B cell (primary cell): ENCODE measurements at regions of chr11 and their contacts with region 1.

Region 1: DNA sequence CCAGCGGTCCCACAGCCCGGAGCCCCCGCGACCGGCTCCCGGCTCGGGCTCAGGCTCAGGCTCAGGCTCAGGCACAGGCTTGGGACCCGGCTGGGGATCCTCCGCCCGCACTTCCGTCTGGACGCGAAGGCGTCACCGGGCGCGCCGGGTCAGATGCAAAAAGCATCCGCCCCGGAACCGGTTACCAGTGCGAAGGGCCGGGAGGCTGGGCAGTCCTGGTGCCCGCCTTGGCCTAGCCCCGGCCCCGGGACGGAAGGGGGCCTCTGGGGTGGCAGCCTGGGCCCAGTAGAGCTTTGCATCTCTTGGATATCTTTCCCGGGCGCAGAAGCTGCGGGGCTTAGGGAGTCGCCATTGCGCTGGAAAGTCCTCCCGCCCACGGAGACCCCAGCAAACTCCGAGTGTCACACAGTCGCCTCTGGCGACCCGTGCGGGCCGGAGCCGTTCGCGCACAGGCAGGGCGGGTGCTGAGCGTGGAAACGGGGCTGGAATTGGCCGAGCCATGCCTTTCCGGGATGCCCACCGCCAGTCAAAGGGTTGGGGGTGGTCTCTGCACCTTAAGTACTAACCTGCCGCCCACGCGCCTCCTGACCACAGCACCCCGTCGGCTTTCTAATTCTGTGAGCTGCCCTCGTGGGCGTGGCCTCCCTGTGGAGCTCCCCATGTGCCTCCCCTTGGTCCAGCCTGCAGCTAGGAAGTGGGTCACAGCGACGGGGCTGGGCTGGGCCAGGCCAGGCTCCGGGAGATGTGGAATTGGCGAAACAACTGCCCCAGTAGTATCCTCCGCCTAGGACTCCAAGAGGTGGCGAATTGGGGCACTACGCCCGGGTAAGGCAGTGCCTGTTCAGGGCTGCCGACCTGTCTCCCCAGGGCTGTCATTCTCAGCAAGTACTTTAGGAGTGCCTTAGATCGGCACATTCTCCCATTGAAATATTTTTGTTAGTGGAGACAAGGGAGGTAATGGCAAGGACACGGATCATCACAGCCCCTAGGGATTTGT is at the start of gene TMEM9B:
- DNase-seq: peak; percentile 91
- ATAC-seq: peak; percentile 84
- H3K4me3 ChIP-seq: peak within 1 kb of the TSS; percentile 50 to 89 (median 85)
- H3K4me3 Mint-ChIP-seq: peak within 1 kb of the TSS; percentile 96
- H3K27ac ChIP-seq: peak within 1 kb of the TSS; percentile 89 to 94
- H3K27ac Mint-ChIP-seq: peak within 1 kb of the TSS; percentile 93
- H3K4me1 ChIP-seq: peaks cover 15 to 20% of the 10 kb centered on the region in 2 donors
- H3K4me1 Mint-ChIP-seq: peaks cover 35% of the 10 kb centered on the region
- H3K27me3 ChIP-seq: no peaks in the 10 kb centered on the region
- H3K27me3 Mint-ChIP-seq: no peaks in the 10 kb centered on the region
- CTCF ChIP-seq: no peak
- total RNA-seq, gene TMEM9B: 29.3 and 30.4 TPM in 2 replicates

Region 2: DNA sequence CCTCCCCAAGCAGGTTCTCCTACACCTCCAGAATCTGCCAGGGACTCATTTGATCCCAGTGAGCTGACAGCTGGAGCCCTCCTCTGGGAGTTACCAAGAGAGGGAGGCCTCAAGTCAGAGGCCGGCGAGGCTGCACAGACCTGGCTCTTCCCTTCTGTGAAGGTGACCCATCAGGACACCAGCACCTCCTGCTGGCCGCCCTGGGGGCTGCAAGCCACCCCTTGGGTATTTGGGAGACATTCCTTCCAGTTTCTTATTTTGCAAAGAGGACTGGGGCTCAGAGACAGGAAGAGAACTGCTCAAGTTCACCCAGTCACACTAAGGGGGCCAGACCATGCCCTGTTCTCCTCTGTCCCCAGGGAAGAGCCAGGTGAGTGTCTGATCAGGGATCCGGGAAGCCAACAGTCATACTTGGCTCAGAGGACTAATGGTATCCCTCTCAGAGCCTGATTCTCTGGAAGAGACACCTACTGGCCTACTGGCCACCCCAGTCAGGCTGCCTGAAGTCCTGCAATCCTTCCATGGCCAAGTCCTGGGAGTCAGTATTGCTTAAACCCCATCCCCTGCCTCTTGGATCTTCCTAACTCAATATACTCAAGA is 755.3 kb before region 1 on chr11:
- CTCF ChIA-PET with region 1: no interaction called
- POLR2A ChIA-PET with region 1: no interaction called
- intact Hi-C with region 1: loop called (anchors 10 kb)
- DNase-seq: peak; percentile 73
- ATAC-seq: peak; percentile 49
- H3K4me3 ChIP-seq: no peak overlapping the region
- H3K4me3 Mint-ChIP-seq: no peak overlapping the region
- H3K27ac ChIP-seq: no peak overlapping the region
- H3K27ac Mint-ChIP-seq: peak overlapping the region; percentile 50
- H3K4me1 ChIP-seq: peaks cover 33 to 54% of the 10 kb centered on the region in 2 donors
- H3K4me1 Mint-ChIP-seq: peaks cover 34% of the 10 kb centered on the region
- H3K27me3 ChIP-seq: no peaks in the 10 kb centered on the region
- H3K27me3 Mint-ChIP-seq: no peaks in the 10 kb centered on the region
- CTCF ChIP-seq: peak; percentile 93

Region 3: DNA sequence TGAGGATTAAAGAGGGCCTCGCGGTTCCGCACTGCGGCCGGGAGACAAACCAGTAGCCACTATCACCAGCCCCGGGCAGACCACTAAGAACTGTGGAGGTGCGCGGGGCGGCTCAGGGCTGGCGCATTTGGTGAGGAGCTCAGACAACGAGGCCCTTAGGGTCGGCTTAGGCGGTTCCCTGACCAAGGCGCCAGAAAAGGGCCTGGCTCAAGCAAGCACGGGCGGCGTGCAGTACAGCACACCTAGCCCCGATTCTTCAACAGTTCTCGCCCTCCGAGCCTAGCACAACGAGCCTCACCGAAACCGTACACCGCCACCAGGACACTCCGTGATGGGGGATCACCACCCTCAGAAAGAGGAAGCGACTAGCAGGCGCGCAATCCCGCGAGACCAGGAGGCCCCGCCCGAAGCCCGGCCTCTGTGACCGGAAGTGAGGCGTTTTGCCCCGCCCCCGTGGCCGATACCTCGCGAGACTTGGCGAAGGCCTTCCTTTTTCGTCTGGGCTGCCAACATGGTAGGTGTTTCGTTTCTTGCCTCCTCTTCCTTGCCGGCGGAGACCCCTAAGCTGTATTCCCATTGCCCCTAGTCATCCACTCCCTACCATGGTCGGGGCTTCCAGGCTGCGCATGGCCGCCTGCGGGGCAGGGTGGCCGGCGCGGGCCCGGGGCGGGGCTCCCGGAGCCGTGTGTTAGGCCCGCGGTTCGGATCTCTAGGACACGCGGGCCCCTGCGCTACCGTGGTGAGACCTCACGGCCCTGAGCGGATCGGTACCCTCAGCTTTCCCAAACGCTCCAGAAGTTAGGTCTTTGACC is 282.1 kb before region 1 on chr11 and contains the starts of genes RPL27A and TRIM66:
- CTCF ChIA-PET with region 1: interaction called, 3 read pairs
- POLR2A ChIA-PET with region 1: interaction called, 4 read pairs
- intact Hi-C with region 1: loop called (anchors 2 kb)
- DNase-seq: peak; percentile 98
- ATAC-seq: peak; percentile 93
- H3K4me3 ChIP-seq: peak within 1 kb of the TSS; percentile 82 to 99 (median 88)
- H3K4me3 Mint-ChIP-seq: peak within 1 kb of the TSS; percentile 94
- H3K27ac ChIP-seq: peak within 1 kb of the TSS; percentile 87 to 98
- H3K27ac Mint-ChIP-seq: peak within 1 kb of the TSS; percentile 97
- H3K4me1 ChIP-seq: peaks cover 25 to 26% of the 10 kb centered on the region in 2 donors
- H3K4me1 Mint-ChIP-seq: peaks cover 41% of the 10 kb centered on the region
- H3K27me3 ChIP-seq: no peaks in the 10 kb centered on the region
- H3K27me3 Mint-ChIP-seq: no peaks in the 10 kb centered on the region
- CTCF ChIP-seq: peak; percentile 18
- total RNA-seq, gene RPL27A: 1,369 and 1,473 TPM in 2 replicates
- total RNA-seq, gene TRIM66: 21.1 and 21.4 TPM in 2 replicates

Region 4: DNA sequence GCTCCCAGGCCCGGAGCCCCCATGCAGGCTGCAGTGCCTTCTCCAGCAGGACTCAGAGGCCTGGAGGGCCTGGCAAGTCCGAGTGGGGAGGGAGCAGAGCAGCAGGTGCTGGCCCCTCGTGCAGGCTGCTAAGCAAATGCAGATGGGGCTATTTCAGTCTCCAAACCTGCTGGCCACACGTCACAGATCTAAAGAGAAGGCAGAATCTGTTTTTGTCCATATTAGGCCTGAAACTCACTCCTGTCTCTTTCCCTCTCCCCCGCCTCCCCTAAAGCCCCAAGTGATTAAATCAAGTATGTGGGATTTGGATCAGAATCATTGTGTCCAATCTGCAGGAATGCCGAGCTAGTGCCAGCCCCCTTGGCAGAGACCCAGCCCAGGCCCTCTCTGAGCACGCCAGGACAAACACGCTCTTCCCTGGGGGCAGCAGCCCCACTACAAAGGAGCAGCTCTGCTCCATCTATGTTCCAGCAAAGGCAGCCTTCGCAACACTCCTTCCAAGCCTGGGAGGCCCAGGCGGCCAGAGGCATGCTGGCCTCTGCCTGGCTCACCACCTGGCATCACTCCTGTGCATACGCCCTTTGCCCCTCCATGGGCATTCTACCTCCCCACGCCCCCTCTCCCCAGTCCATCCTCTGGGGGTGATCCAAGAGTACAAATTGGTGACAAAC is 255.5 kb before region 1 on chr11:
- CTCF ChIA-PET with region 1: no interaction called
- POLR2A ChIA-PET with region 1: no interaction called
- intact Hi-C with region 1: no loop called
- DNase-seq: no peak
- ATAC-seq: no peak
- H3K4me3 ChIP-seq: no peak overlapping the region
- H3K4me3 Mint-ChIP-seq: no peak overlapping the region
- H3K27ac ChIP-seq: no peak overlapping the region
- H3K27ac Mint-ChIP-seq: no peak overlapping the region
- H3K4me1 ChIP-seq: no peaks in the 10 kb centered on the region
- H3K4me1 Mint-ChIP-seq: no peaks in the 10 kb centered on the region
- H3K27me3 ChIP-seq: no peaks in the 10 kb centered on the region
- H3K27me3 Mint-ChIP-seq: no peaks in the 10 kb centered on the region
- CTCF ChIP-seq: no peak

Region 5: GRCh38 chr11:8911029-8911826 is 53.4 kb before region 1 on chr11 and contains the start of gene AKIP1:
- CTCF ChIA-PET with region 1: interaction called, 44 read pairs
- POLR2A ChIA-PET with region 1: no interaction called
- intact Hi-C with region 1: loop called (anchors 1 kb)
- DNase-seq: peak; percentile 81
- ATAC-seq: peak; percentile 77
- H3K4me3 ChIP-seq: peak within 1 kb of the TSS; percentile 61 to 78 (median 69)
- H3K4me3 Mint-ChIP-seq: peak within 1 kb of the TSS; percentile 96
- H3K27ac ChIP-seq: peak within 1 kb of the TSS; percentile 12 to 58
- H3K27ac Mint-ChIP-seq: peak within 1 kb of the TSS; percentile 86
- H3K4me1 ChIP-seq: peaks cover 18 to 26% of the 10 kb centered on the region in 2 donors
- H3K4me1 Mint-ChIP-seq: peaks cover 46% of the 10 kb centered on the region
- H3K27me3 ChIP-seq: peaks cover 0 to 3% (median 0%) of the 10 kb centered on the region in 4 experiments
- H3K27me3 Mint-ChIP-seq: peaks cover 2% of the 10 kb centered on the region
- CTCF ChIP-seq: no peak
- total RNA-seq, gene AKIP1: 10.7 and 11.5 TPM in 2 replicates

Region 6: GRCh38 chr11:8948886-8949285 is 15.7 kb before region 1 on chr11:
- CTCF ChIA-PET with region 1: interaction called, 15 read pairs
- POLR2A ChIA-PET with region 1: no interaction called
- intact Hi-C with region 1: no loop called
- DNase-seq: no peak
- ATAC-seq: no peak
- H3K4me3 ChIP-seq: no peak overlapping the region
- H3K4me3 Mint-ChIP-seq: no peak overlapping the region
- H3K27ac ChIP-seq: no peak overlapping the region
- H3K27ac Mint-ChIP-seq: no peak overlapping the region
- H3K4me1 ChIP-seq: no peaks in the 10 kb centered on the region
- H3K4me1 Mint-ChIP-seq: no peaks in the 10 kb centered on the region
- H3K27me3 ChIP-seq: no peaks in the 10 kb centered on the region
- H3K27me3 Mint-ChIP-seq: no peaks in the 10 kb centered on the region
- CTCF ChIP-seq: no peak

Region 7: DNA sequence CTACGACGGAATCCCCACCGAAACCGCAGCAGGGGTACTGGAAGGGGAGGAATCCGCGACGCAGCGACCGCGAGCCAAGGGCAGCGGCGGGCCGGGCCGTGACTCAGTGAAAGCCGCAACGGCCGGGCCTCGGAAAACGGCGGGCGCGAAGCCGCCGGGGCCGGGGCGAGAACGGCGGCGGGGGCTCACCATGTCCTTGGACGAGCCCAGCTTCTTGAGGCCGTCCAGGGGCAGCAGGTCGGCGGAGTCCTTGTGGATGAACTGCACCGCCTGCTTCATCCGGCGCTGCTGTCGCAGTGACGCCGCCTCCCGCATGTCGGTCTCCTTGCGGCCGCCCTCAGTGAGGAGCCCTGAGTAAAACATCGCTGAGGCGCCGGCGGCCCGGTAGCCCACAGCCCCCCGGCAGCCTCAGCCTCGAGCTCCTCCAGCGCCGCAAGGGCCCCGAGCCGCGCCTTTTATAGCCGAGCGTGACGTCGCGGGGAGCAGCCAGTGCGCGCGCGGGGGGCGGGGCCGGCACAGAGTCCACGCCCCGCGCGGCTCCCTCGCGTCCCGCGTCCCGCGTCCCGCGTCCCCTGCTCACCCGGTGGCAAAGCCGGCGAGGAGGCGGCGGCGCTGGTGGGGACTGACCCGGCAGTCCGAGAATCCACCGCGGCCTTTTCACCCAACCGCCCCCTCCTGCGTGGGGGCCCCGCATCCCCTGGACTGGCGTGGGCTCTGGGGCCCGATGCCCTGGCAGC is 39.1 kb after region 1 on chr11 and contains the start of gene NRIP3:
- CTCF ChIA-PET with region 1: no interaction called
- POLR2A ChIA-PET with region 1: no interaction called
- intact Hi-C with region 1: loop called (anchors 2 kb)
- DNase-seq: peak; percentile 85
- ATAC-seq: peak; percentile 86
- H3K4me3 ChIP-seq: peak within 1 kb of the TSS; percentile 23 to 60 (median 54)
- H3K4me3 Mint-ChIP-seq: peak within 1 kb of the TSS; percentile 87
- H3K27ac ChIP-seq: no peak within 1 kb of the TSS
- H3K27ac Mint-ChIP-seq: no peak within 1 kb of the TSS
- H3K4me1 ChIP-seq: peaks cover 18 to 19% of the 10 kb centered on the region in 2 donors
- H3K4me1 Mint-ChIP-seq: peaks cover 16% of the 10 kb centered on the region
- H3K27me3 ChIP-seq: peaks cover 2 to 60% (median 46%) of the 10 kb centered on the region in 4 experiments
- H3K27me3 Mint-ChIP-seq: peaks cover 50% of the 10 kb centered on the region
- CTCF ChIP-seq: no peak
- total RNA-seq, gene NRIP3: 0.56 and 0.59 TPM in 2 replicates

Region 8: DNA sequence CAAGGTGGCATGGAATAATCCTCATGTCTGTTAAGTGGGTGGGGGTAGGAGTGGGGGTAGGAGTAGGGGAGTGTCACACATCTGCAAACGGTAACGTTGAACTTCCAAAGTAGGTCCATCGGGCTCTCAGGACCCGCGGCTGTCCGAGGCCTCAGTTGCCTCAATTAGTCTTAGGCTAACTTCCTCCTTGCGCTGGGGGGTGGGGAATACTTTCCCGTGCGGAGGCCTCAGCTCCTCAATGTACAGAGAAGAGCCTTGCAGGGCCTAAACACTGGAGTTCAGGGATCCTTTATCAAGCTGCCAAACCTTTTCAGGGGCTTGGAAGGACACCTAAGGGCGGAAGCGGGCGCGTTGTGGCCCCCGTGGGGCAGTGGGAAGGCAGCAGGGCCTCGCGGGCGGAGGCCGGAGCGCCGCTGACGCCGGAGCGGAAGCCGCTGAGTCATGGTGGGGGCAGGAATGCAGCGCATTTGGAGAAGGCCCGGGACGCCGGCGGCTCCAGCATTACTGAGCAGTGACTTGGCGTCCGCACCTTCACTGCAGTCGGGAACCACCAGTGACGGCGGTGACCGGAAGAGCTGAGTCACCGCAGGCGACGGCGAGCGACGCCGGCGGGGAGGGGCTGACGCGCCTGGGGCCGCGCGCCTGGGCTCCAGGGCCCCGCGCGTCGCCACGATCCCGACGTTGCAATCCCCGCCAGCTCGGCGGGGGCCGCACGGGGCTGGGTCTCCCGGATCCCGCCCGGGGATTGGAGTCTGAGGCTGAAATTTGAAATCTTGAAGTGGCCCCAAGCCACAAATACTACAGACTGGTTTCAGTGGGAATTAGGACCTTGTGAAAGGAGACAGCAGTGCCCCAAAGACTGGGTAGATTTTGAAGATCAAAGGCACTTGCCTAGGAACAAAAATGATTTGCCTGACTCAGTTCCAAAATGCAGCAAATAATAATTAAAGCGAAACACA is 399.6 kb after region 1 on chr11:
- CTCF ChIA-PET with region 1: no interaction called
- POLR2A ChIA-PET with region 1: no interaction called
- intact Hi-C with region 1: loop called (anchors 1 kb)
- DNase-seq: peak; percentile 83
- ATAC-seq: peak; percentile 95
- H3K4me3 ChIP-seq: peak overlapping the region; percentile 63 to 84 (median 74)
- H3K4me3 Mint-ChIP-seq: peak overlapping the region; percentile 89
- H3K27ac ChIP-seq: peak overlapping the region; percentile 69 to 73
- H3K27ac Mint-ChIP-seq: peak overlapping the region; percentile 87
- H3K4me1 ChIP-seq: peaks cover 0 to 9% of the 10 kb centered on the region in 2 donors
- H3K4me1 Mint-ChIP-seq: peaks cover 9% of the 10 kb centered on the region
- H3K27me3 ChIP-seq: no peaks in the 10 kb centered on the region
- H3K27me3 Mint-ChIP-seq: no peaks in the 10 kb centered on the region
- CTCF ChIP-seq: no peak